ENCODE measurements at regions of chr2 and their contacts with region 1.

Region 1: DNA sequence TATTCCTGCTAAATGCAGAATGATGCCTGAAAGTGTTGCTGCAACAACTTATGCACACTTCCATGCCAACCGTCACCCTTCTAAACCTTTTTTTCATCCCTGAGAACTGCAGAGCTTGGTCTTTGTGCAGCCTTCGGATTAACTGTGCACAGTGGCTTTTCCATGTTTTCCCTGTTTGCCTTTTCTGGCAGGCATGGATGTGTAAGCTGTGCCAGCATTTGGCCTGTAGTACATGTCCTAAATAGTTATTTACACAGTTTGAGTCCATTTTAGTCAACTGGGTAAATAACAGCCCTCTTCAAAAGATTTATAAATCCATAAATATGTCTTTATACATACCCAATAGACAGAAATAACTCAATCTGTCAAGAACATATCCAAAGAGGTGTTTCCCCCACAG is 31.5 kb downstream of the MEIS1 start:
- DNase-seq: no peak

Region 2: DNA sequence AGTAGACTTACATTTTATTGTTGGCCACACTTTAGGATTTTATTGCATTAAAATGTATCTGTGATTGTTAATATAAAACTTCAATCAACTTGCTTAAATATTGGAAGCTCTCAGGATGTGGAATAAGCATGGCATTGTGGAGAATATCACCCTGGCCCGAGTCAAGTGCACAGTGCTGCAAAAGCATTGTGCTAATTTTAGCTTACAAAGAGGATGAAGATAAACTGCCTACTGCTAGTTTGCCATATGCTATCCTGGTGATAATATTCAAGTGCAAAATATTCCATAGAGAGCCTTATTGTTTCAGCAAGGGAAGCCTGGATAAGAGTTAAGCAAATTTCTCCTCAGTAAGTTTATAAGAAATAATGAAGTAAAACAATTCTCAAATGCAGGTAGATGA is 23.0 kb after region 1 on chr2:
- intact Hi-C with region 1: loop called (anchors 2 kb)
- DNase-seq: no peak

Region 3: DNA sequence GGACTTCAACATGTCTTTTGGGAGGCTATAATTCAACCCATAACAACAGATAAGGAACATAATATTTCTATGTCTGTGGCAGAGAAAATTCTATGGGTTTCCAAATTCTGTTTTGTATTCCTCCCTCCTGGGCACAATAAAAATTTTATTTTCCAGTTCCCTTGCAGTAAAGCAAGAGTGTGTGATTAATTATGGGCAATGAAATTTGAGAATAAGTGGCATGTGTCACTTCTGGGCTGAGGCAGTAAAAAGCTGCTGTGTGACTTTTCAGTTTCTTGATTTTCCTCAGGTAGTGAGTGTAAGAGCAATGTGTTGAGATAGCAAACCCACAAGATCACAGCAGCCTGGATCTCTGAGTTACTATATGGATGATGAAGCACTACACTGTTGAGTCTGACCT is 184.9 kb after region 1 on chr2:
- intact Hi-C with region 1: no loop called
- DNase-seq: no peak